ENCODE measurements at regions of chr16 and their contacts with region 1.

Region 1: GRCh38 chr16:84277237-84277823 is 17.3 kb upstream of the WFDC1 start:
- DNase-seq: peak; percentile 50 to 83 (median 68)
- ATAC-seq: peak; percentile 69
- H3K4me3 ChIP-seq: no peak overlapping the region
- H3K4me3 Mint-ChIP-seq: no peak overlapping the region
- H3K27ac ChIP-seq: no peak overlapping the region
- H3K27ac Mint-ChIP-seq: no peak overlapping the region
- H3K4me1 ChIP-seq: peaks cover 3% of the 10 kb centered on the region
- H3K4me1 Mint-ChIP-seq: no peaks in the 10 kb centered on the region
- H3K27me3 ChIP-seq: peaks cover 0 to 3% of the 10 kb centered on the region in 2 experiments
- H3K27me3 Mint-ChIP-seq: peaks cover 6% of the 10 kb centered on the region
- CTCF ChIP-seq: peak; percentile 92

Region 2: DNA sequence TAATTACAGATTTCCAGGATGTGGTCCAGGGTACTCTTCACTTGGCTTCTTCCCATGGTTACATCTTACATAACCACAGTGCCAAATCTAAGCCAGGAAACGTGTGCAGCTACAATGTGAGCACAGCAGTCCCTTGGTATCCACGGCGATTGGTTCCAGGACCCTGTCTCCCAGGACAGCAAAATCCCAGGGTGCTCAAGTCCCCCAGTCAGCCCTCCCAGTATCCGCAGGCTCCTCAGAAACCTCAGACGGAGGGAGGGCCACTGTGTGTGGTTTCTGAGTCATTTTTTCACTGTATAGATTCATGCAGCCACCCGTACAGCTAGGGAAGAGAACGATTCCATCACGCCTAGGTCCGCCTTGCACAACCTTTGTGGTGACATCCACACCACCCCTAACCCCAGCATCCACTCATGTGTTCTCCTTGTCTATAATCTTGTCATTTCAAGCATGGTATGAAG is 79.9 kb after region 1 on chr16:
- CTCF ChIA-PET with region 1: no interaction called
- POLR2A ChIA-PET with region 1: no interaction called
- intact Hi-C with region 1: no loop called
- DNase-seq: peak in 2 of 14 experiments; percentile 43 to 52
- ATAC-seq: peak; percentile 21
- H3K4me3 ChIP-seq: no peak overlapping the region
- H3K4me3 Mint-ChIP-seq: no peak overlapping the region
- H3K27ac ChIP-seq: no peak overlapping the region
- H3K27ac Mint-ChIP-seq: no peak overlapping the region
- H3K4me1 ChIP-seq: peaks cover 12% of the 10 kb centered on the region
- H3K4me1 Mint-ChIP-seq: peaks cover 20% of the 10 kb centered on the region
- H3K27me3 ChIP-seq: no peaks in the 10 kb centered on the region
- H3K27me3 Mint-ChIP-seq: peaks cover 5% of the 10 kb centered on the region
- CTCF ChIP-seq: no peak

Region 3: GRCh38 chr16:84484579-84485254 is 207.4 kb after region 1 on chr16:
- CTCF ChIA-PET with region 1: interaction called, 3 read pairs
- POLR2A ChIA-PET with region 1: no interaction called
- intact Hi-C with region 1: loop called in 1 of 2 experiments (anchors 5 kb)
- DNase-seq: peak in 1 of 14 experiments; percentile 21
- ATAC-seq: no peak
- H3K4me3 ChIP-seq: no peak overlapping the region
- H3K4me3 Mint-ChIP-seq: no peak overlapping the region
- H3K27ac ChIP-seq: no peak overlapping the region
- H3K27ac Mint-ChIP-seq: no peak overlapping the region
- H3K4me1 ChIP-seq: no peaks in the 10 kb centered on the region
- H3K4me1 Mint-ChIP-seq: no peaks in the 10 kb centered on the region
- H3K27me3 ChIP-seq: no peaks in the 10 kb centered on the region
- H3K27me3 Mint-ChIP-seq: no peaks in the 10 kb centered on the region
- CTCF ChIP-seq: peak; percentile 28

Region 4: DNA sequence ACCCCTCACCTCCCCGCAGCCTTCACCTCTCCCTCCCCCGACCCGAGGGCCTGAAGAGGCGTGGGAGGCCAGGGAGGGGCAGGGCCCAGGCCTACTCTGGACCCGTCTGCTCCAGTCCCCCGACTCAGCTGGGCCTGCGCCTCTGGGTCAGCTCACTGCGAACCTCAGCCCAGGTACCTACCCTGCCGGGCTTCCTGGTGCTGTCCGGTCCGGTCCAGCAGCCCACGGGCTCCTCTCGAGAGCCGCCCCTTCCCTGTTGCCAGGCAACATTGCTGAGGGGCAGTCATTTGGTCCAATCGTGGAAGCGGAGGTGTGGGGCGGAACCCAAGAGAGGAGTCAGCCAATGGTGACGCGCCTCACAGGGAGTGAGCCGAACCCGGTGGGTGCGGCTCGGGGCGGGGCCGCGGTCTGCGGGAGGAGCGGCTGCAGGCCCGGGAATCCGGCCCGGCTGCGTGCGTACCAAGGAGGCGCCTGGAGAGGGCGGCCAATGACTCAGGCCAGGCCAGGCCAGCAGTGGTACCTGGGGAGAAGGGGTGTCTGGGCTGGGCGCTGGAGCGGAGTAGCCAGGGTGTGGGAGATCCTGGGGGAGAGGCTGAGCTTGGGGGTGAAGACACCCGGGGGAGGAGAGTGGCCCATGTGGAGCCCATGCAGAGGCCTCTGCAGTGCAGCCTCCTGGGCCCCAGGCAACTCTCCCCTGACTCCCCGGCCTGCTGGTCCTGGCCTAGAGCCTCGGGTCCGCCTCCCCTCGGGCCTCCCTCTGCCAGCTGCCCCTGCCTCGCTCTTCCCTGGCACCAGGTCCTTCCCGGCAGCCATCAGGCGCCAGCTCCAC is 227.3 kb after region 1 on chr16 and contains the start of gene MEAK7:
- CTCF ChIA-PET with region 1: no interaction called
- POLR2A ChIA-PET with region 1: no interaction called
- intact Hi-C with region 1: loop called in 1 of 2 experiments (anchors 5 kb)
- DNase-seq: peak; percentile 95 to 98 (median 98)
- ATAC-seq: peak; percentile 95
- H3K4me3 ChIP-seq: peak within 1 kb of the TSS; percentile 85
- H3K4me3 Mint-ChIP-seq: peak within 1 kb of the TSS; percentile 93
- H3K27ac ChIP-seq: peak within 1 kb of the TSS; percentile 34 to 46
- H3K27ac Mint-ChIP-seq: peak within 1 kb of the TSS; percentile 90
- H3K4me1 ChIP-seq: peaks cover 64% of the 10 kb centered on the region
- H3K4me1 Mint-ChIP-seq: peaks cover 62% of the 10 kb centered on the region
- H3K27me3 ChIP-seq: no peaks in the 10 kb centered on the region
- H3K27me3 Mint-ChIP-seq: no peaks in the 10 kb centered on the region
- CTCF ChIP-seq: no peak
- total RNA-seq, gene MEAK7: 1.9 to 3.7 TPM

Region 5: DNA sequence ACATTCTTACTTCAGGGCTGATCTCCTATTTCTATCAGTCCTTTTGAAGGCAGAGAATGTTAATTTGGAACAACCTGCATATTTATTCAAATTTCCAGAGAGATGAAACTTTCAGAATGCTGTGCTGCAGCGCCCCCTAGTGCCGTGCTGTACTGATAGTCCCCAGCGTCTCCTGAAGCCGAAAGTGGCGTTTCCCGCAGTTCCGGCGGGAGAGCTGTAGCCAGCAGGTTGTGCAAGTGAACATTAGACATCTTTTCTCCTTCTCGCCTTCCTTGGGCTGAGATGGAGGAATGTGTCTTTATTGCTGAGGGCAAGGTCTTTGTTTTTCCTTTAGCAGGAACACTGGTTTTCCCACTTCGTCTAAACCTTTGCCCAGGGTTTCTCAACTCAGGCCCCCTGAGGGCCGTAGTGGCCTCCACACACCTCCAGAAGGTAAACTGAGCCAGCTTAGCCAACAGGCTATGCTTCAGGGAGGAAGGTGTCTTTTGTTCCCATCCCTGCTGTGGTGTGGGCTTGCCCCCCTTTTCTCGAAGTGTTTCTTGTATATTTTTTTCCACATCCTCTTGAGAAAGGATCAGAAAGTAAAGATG is 448.8 kb after region 1 on chr16:
- CTCF ChIA-PET with region 1: no interaction called
- POLR2A ChIA-PET with region 1: no interaction called
- intact Hi-C with region 1: loop called (anchors 1 kb)
- DNase-seq: peak; percentile 76 to 93 (median 84)
- ATAC-seq: peak; percentile 76
- H3K4me3 ChIP-seq: no peak overlapping the region
- H3K4me3 Mint-ChIP-seq: peak overlapping the region; percentile 39
- H3K27ac ChIP-seq: no peak overlapping the region
- H3K27ac Mint-ChIP-seq: no peak overlapping the region
- H3K4me1 ChIP-seq: peaks cover 17% of the 10 kb centered on the region
- H3K4me1 Mint-ChIP-seq: peaks cover 81% of the 10 kb centered on the region
- H3K27me3 ChIP-seq: no peaks in the 10 kb centered on the region
- H3K27me3 Mint-ChIP-seq: no peaks in the 10 kb centered on the region
- CTCF ChIP-seq: peak; percentile 99

Region 6: DNA sequence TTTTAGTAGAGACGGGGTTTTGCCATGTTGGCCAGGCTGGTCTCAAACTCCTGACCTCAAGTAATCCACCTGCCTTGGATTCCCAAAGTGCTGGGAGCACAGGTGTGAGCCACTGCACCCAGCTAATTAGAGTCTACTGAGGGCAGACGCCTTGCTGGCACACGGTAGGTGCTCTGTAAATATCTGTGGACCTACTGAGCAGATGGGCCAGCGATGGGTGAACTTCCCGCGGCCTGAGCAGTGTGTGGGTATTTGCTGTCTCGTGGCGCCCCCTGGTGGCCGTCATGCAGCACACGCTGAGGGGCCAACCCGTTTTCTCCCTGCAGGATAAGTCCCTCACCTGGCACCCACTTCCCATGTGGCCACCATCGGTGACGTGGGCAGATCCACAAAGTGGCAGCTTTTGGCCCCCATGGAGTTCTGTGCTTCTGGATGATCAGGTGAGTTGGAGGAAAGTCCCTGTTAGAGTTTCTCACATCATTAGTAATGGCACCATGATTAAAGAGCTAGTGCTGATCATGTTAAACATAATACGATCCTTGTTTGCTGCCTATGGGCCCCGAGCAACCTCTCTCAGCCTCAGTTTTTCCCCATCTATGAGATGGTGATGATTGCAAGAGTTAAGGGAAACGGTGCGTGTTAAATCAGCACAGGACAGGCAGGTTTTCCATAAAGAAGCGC is 693.3 kb after region 1 on chr16:
- CTCF ChIA-PET with region 1: no interaction called
- POLR2A ChIA-PET with region 1: no interaction called
- intact Hi-C with region 1: loop called (anchors 10 kb)
- DNase-seq: peak; percentile 66 to 91 (median 74)
- ATAC-seq: peak; percentile 99
- H3K4me3 ChIP-seq: no peak overlapping the region
- H3K4me3 Mint-ChIP-seq: no peak overlapping the region
- H3K27ac ChIP-seq: no peak overlapping the region
- H3K27ac Mint-ChIP-seq: no peak overlapping the region
- H3K4me1 ChIP-seq: peaks cover 9% of the 10 kb centered on the region
- H3K4me1 Mint-ChIP-seq: peaks cover 6% of the 10 kb centered on the region
- H3K27me3 ChIP-seq: no peaks in the 10 kb centered on the region
- H3K27me3 Mint-ChIP-seq: no peaks in the 10 kb centered on the region
- CTCF ChIP-seq: peak; percentile 91

Measured in CD4-positive, alpha-beta T cell (primary cell).